ENCODE measurements at regions of chr12 and their contacts with region 1.

Region 1: GRCh38 chr12:16347391-16348298 is at the start of gene MGST1:
- DNase-seq: peak; percentile 83 to 87
- H3K4me3 ChIP-seq: peak within 1 kb of the TSS; percentile 60
- H3K4me3 Mint-ChIP-seq: peak within 1 kb of the TSS; percentile 96
- H3K27ac Mint-ChIP-seq: peak within 1 kb of the TSS; percentile 98
- H3K4me1 ChIP-seq: peaks cover 36% of the 10 kb centered on the region
- H3K4me1 Mint-ChIP-seq: peaks cover 59% of the 10 kb centered on the region
- H3K27me3 ChIP-seq: no peaks in the 10 kb centered on the region
- H3K27me3 Mint-ChIP-seq: no peaks in the 10 kb centered on the region
- CTCF ChIP-seq: no peak
- total RNA-seq, gene MGST1: 105 and 122 TPM in 2 replicates

Region 2: DNA sequence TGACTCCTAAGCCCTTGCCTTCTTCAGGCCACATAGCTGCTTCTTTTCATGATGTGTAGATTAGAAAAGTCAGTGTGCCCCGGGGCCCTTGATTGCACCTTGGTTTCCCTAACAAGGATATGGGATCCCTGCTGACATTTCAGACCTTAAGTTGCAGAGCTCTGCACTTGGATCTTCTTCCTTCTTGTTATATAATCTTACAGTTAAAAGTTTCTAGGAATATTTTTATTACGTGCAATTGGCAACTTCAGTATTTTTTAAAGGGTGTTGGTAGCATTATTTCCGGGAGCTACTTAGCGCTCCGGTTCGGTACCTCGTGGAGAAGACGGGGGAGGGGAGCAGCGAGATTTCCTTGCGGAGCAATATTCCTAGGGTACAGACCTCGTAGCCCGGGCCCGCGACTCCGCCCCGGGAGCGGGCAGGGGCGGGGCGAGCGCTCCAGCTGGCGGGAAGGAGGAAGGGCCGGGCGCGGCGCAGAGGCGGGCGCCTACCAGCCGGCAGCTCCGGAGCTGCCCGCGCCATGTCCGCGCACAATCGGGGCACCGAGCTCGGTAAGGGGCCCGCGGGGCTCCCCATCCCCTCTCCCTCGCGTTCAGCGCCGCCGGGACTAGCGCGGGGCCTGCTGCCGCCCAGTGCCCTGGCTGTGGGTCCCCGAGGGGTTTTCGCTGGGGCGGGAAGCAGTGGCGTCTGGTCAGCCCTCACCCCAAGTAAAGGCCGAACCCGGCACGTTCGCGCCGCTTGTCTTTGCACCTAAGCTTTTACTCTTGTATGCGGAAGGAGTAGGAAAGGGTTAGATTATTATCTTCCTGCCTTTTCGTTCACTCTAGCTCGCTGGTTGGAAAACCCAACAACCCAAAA is 436.6 kb before region 1 on chr12 and contains the start of gene DERA:
- CTCF ChIA-PET with region 1: no interaction called
- POLR2A ChIA-PET with region 1: no interaction called
- intact Hi-C with region 1: loop called (anchors 10 kb)
- DNase-seq: peak; percentile 91 to 94
- H3K4me3 ChIP-seq: peak within 1 kb of the TSS; percentile 87
- H3K4me3 Mint-ChIP-seq: peak within 1 kb of the TSS; percentile 88
- H3K27ac Mint-ChIP-seq: peak within 1 kb of the TSS; percentile 93
- H3K4me1 ChIP-seq: peaks cover 22% of the 10 kb centered on the region
- H3K4me1 Mint-ChIP-seq: no peaks in the 10 kb centered on the region
- H3K27me3 ChIP-seq: no peaks in the 10 kb centered on the region
- H3K27me3 Mint-ChIP-seq: no peaks in the 10 kb centered on the region
- CTCF ChIP-seq: no peak
- total RNA-seq, gene DERA: 84.3 and 86.4 TPM in 2 replicates

Region 3: DNA sequence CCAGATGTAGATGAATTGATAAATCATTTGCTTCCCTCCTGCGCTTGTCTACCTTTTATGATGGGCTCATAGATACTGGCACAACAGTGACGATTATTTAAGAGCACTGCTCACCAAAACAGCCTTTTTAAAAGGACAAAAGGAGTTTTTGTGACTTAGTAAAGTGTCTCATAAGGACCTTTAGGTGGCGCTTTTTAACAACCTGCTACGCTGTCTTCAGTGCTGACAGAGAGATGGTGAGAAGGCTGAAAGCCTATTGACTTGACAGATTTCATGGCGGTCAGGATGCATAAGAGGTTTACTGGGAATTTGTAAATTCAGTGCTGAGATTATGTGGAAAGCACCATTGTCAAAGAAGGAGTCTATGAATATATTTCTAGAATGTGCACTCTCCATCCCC is 157.8 kb before region 1 on chr12:
- CTCF ChIA-PET with region 1: no interaction called
- POLR2A ChIA-PET with region 1: no interaction called
- intact Hi-C with region 1: loop called (anchors 5 kb)
- DNase-seq: peak; percentile 30 to 41
- H3K4me3 ChIP-seq: no peak overlapping the region
- H3K4me3 Mint-ChIP-seq: no peak overlapping the region
- H3K27ac Mint-ChIP-seq: no peak overlapping the region
- H3K4me1 ChIP-seq: peaks cover 6% of the 10 kb centered on the region
- H3K4me1 Mint-ChIP-seq: peaks cover 5% of the 10 kb centered on the region
- H3K27me3 ChIP-seq: no peaks in the 10 kb centered on the region
- H3K27me3 Mint-ChIP-seq: peaks cover 7% of the 10 kb centered on the region
- CTCF ChIP-seq: peak; percentile 61 to 64

Region 4: DNA sequence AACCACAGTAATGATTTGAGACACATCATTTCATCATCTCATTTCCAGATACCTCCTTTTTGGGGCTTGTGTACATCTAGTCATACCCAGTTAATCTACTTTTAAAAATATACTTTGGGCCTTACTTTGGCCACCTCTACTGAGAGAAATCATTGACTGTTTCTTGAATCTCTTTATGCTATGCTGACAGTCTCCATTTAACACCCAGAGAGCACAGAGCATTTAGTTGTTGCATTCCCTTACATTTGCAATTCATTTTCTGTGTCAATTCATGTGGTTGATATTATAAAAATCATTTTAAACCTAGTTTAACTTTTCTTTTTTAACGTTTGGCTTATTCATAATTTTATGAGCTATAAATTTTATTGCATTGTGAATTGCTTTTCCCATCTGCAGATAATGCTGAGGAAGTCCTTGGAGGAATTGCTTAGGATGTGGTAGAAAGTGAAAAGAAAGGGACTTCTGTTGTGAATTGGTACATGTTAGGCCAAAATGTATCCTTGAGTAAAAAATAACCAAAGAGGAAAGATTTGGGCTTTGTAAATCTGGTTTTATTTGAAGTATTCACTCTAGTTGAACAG is 53.2 kb before region 1 on chr12:
- CTCF ChIA-PET with region 1: no interaction called
- POLR2A ChIA-PET with region 1: no interaction called
- intact Hi-C with region 1: loop called (anchors 5 kb)
- DNase-seq: no peak
- H3K4me3 ChIP-seq: no peak overlapping the region
- H3K4me3 Mint-ChIP-seq: no peak overlapping the region
- H3K27ac Mint-ChIP-seq: no peak overlapping the region
- H3K4me1 ChIP-seq: no peaks in the 10 kb centered on the region
- H3K4me1 Mint-ChIP-seq: peaks cover 6% of the 10 kb centered on the region
- H3K27me3 ChIP-seq: no peaks in the 10 kb centered on the region
- H3K27me3 Mint-ChIP-seq: peaks cover 8% of the 10 kb centered on the region
- CTCF ChIP-seq: no peak

Measured in Caco-2 (cell line).